ENCODE measurements at regions of chr11 and their contacts with region 1.

Region 1: GRCh38 chr11:33736148-33736809 is at the start of gene CD59:
- DNase-seq: peak; percentile 98
- ATAC-seq: peak; percentile 98
- total RNA-seq, gene CD59: 633 to 874 TPM

Region 2: DNA sequence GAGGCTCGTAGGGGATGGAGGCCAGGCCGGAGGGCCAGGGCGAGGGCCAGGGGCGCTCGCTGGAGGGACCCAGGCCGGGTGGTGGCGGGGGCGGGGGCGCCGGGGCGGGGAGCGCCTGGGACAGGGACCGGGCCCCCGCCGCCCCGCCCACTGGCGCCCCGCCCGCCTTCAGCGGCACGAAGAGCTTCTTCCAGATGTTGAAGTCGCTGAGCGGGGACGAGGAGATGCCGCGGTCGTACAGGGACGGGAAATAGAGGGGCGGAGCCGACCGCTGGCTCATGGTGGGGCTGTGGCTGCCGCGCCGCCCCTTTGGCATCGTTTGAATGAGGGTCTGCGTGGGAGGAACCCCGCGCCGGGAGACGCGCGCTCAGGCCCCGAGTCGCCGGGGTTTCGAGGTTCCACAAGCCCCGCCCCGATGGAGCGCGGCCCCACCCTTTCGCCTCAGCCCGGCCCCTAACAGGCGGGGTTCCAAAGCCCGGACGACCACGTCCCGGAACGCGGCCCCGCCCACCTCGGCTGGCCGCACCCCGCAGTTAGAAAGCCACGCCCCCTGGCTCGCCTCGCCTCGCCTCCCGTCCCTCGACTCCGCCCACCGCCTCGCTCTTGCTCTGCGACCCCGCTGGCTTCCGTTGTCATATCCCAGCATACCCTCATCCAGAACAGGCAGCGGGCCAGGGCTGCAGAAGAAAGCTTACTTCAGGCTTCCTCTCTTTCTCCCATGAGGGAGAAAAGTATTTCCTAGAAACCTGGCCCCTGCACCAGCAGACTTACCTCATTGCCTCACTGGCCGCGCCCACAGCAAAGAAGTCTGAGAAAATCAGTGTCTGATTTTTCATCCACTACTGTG is 35.6 kb before region 1 on chr11 and contains the start of gene C11orf91:
- intact Hi-C with region 1: loop called in 1 of 2 experiments (anchors 5 kb)
- DNase-seq: peak; percentile 98
- ATAC-seq: peak; percentile 92 to 94
- total RNA-seq, gene C11orf91: 0.29 to 1.7 TPM

Region 3: GRCh38 chr11:33753304-33753967 is 17.2 kb after region 1 on chr11:
- intact Hi-C with region 1: no loop called
- DNase-seq: no peak
- ATAC-seq: peak; percentile 83 to 93

Measured in left cardiac atrium (tissue), 4 donors.